CD4-positive, alpha-beta memory T cell (primary cell): ENCODE measurements at regions of chr5 and their contacts with region 1.

Region 1: DNA sequence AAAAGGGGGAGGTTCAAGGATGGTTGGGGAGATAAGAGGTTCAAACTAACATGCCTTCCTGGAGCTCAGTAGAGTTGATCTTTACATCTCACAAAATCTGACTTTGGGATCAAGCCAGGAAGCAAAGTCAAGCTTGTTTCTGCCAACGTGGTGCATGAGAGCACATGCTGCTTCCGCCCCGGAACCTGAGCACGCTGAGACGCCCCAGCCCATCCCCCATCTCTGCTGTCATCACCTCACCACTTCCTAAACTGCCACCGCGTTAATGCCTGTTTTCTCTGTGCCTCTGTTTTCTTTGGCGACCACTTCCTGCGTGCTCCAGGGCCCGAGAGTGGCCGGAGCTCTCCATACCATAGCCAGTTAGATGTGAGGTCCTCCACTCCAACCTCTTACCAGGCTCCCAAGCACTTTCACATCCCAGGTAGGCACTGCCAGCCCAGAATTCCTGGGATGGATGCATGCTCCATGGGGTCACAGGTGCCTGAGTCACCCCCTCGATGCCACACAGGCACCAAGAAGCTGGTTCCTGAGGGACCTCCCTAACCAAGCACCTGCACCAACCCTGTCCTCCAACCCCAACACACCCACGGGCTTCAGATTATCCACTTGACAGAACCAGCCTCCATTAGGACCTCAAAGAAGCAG is 31.2 kb upstream of the AFAP1L1 start:
- DNase-seq: peak; percentile 78 to 91 (median 88)
- H3K4me3 ChIP-seq: peak overlapping the region; percentile 26 to 34
- H3K4me3 Mint-ChIP-seq: peak overlapping the region; percentile 25 to 80 (median 64)
- H3K27ac ChIP-seq: peak overlapping the region; percentile 49
- H3K27ac Mint-ChIP-seq: peak overlapping the region; percentile 81 to 95 (median 89)
- H3K4me1 ChIP-seq: peaks cover 35% of the 10 kb centered on the region
- H3K4me1 Mint-ChIP-seq: peaks cover 29 to 57% (median 37%) of the 10 kb centered on the region in 4 donors
- H3K27me3 ChIP-seq: no peaks in the 10 kb centered on the region
- H3K27me3 Mint-ChIP-seq: no peaks in the 10 kb centered on the region

Region 2: DNA sequence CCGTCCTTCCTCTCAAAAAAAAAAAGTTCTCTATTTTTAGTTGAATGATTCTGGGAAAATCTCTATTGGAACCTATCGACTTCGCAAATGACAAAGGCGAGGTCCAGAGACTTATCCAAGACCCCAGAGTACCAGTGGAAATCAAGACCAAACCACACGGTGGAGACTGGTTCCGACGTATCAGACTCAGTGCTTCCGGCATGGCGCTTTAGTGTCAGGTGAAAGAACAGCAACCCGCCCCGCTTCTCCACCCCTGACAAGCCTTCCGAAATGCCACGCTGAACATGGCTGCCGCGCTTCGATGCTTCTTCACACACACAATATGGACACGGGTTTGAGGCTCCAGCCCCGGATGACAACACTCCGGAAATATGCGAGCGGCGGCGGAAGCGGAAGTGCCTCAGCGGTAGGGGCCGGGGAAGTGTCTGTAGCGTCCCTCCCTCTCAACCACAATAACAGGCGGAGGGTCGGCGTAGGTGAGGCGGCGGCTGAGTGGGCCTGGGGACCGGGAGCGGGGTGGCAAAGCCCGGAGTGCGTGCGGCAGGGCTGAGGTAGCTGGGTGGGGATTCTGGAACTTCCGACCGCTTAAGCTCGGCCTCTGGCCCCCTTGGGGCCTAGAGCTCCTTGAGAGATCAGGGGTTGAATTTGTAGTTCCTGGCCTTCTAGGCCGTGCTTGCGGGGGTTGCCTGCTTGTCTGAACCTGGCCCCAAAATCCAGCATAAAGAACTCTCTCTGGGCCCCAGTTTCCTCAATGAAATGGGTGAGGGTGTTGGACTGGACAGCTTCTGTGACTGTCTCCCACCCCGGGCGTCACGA is 856.7 kb before region 1 on chr5 and contains the start of gene FBXO38:
- CTCF ChIA-PET with region 1: no interaction called
- POLR2A ChIA-PET with region 1: no interaction called
- intact Hi-C with region 1: loop called (anchors 2 kb)
- DNase-seq: peak; percentile 97 to 99 (median 97)
- H3K4me3 ChIP-seq: peak within 1 kb of the TSS; percentile 82 to 86
- H3K4me3 Mint-ChIP-seq: peak within 1 kb of the TSS; percentile 86 to 97 (median 92)
- H3K27ac ChIP-seq: peak within 1 kb of the TSS; percentile 93
- H3K27ac Mint-ChIP-seq: peak within 1 kb of the TSS; percentile 90 to 100 (median 99)
- H3K4me1 ChIP-seq: peaks cover 47% of the 10 kb centered on the region
- H3K4me1 Mint-ChIP-seq: peaks cover 42 to 71% (median 59%) of the 10 kb centered on the region in 4 donors
- H3K27me3 ChIP-seq: no peaks in the 10 kb centered on the region
- H3K27me3 Mint-ChIP-seq: no peaks in the 10 kb centered on the region
- total RNA-seq, gene FBXO38: 77.3 to 78.3 TPM

Region 3: GRCh38 chr5:149141224-149141956 is 99.1 kb before region 1 on chr5 and contains the start of gene ABLIM3:
- CTCF ChIA-PET with region 1: interaction called, 27 read pairs
- POLR2A ChIA-PET with region 1: interaction called, 4 read pairs
- intact Hi-C with region 1: no loop called
- DNase-seq: peak; percentile 58 to 79 (median 68)
- H3K4me3 ChIP-seq: peak within 1 kb of the TSS in 1 of 2 donors; percentile 58
- H3K4me3 Mint-ChIP-seq: peak within 1 kb of the TSS; percentile 33 to 76 (median 56)
- H3K27ac ChIP-seq: no peak within 1 kb of the TSS
- H3K27ac Mint-ChIP-seq: peak within 1 kb of the TSS in 1 of 7 donors; percentile 36
- H3K4me1 ChIP-seq: peaks cover 10% of the 10 kb centered on the region
- H3K4me1 Mint-ChIP-seq: peaks cover 0 to 5% (median under 1%) of the 10 kb centered on the region in 4 donors
- H3K27me3 ChIP-seq: no peaks in the 10 kb centered on the region
- H3K27me3 Mint-ChIP-seq: peaks cover 4 to 18% of the 10 kb centered on the region in 2 donors
- total RNA-seq, gene ABLIM3: not detected

Region 4: GRCh38 chr5:149254506-149254905 is 14.0 kb after region 1 on chr5:
- CTCF ChIA-PET with region 1: interaction called, 4 read pairs
- POLR2A ChIA-PET with region 1: interaction called, 18 read pairs
- intact Hi-C with region 1: no loop called
- DNase-seq: no peak
- H3K4me3 ChIP-seq: no peak overlapping the region
- H3K4me3 Mint-ChIP-seq: no peak overlapping the region
- H3K27ac ChIP-seq: no peak overlapping the region
- H3K27ac Mint-ChIP-seq: no peak overlapping the region
- H3K4me1 ChIP-seq: no peaks in the 10 kb centered on the region
- H3K4me1 Mint-ChIP-seq: peaks cover 0 to 3% (median under 1%) of the 10 kb centered on the region in 4 donors
- H3K27me3 ChIP-seq: no peaks in the 10 kb centered on the region
- H3K27me3 Mint-ChIP-seq: peaks cover 1 to 4% of the 10 kb centered on the region in 2 donors